ENCODE measurements at regions of chr2 and their contacts with region 1.

Region 1: DNA sequence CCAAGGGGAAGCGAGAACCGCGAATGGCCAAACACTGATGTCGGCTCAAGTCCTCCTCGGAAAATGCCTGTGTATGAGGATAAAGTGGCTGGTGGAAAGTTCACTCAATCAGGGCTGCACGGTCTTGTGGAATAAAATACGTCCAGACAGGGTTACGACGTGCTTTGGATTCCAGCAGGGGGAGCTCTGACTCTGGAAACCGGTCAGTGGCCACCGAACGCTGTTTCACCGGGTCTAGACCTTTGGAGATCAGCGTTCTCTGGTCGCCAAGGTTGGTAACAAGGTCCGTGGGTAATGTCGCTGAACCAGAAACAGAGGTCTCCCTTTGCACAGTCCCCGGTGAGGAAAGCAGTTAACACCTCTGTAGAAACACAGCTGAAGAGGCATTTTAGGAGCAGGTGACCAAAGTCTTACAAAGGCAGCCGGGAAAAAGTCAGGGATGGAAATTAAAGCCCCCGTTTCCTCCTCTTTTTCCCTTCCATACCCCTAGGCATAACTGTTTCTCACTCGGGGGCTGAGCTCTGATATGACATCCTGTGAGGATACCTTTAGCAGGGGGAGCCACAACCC is 47.8 kb downstream of the CDCA7 start:
- DNase-seq: peak; percentile 73
- H3K4me3 ChIP-seq: no peak overlapping the region
- H3K27ac ChIP-seq: no peak overlapping the region
- H3K4me1 ChIP-seq: no peaks in the 10 kb centered on the region
- H3K27me3 ChIP-seq: peaks cover 49 to 61% of the 10 kb centered on the region in 2 experiments
- CTCF ChIP-seq: peak; percentile 85 to 88
- POLR2A ChIP-seq: no peak

Region 2: DNA sequence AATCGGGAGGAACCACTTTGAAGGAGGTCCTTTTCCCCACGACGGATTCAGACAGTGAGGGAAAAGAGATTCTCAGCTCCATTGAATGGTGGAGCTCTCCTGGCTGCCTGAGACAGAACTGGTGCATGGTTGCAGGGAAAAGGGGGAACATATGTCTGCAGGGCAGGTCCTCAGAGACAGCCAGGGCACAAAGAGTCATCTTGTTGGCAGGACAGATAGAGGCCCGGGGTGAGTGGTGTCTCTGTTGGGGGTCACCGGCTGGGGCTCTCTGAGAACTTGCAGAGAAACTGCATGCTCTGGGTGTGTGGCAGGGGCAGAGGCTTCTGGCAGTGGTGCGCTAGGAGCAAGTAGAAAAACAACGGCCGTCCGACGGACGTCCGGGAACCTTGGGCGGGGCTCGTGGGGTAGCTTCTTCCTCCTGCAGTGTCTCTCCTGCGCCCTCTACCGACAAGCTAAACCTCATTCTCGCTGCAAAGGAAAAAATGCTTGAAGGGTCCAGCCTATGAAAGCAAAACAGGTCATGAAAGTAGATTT is 46.5 kb after region 1 on chr2:
- CTCF ChIA-PET with region 1: interaction called, 63 read pairs
- POLR2A ChIA-PET with region 1: no interaction called
- dilution Hi-C with region 1: no loop called
- intact Hi-C with region 1: loop called (anchors 1 kb)
- DNase-seq: peak; percentile 64
- H3K4me3 ChIP-seq: peak overlapping the region; percentile 29 to 45 (median 37)
- H3K27ac ChIP-seq: no peak overlapping the region
- H3K4me1 ChIP-seq: peaks cover 3% of the 10 kb centered on the region
- H3K27me3 ChIP-seq: peaks cover 3 to 9% of the 10 kb centered on the region in 2 experiments
- CTCF ChIP-seq: peak; percentile 63 to 65
- POLR2A ChIP-seq: peak; percentile 21

Region 3: DNA sequence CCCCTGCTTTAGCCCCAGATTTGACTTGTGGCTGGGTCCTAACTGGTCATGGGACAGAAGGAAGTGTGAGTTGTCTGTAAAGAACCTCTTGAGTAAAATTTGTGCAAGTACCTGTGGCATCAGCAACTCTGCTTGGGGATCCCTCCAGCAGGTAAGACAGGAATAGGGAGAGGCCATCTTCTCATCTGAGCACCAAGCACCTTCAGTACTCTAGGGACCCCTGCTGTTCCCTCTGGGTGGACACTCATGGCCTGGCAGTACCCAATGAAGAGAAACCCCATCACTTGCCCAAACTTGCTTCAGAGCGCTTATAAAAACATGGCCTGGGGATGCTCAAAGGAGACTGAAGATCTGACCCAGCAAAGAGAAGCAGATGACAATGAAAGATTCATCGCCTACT is 264.9 kb after region 1 on chr2:
- CTCF ChIA-PET with region 1: interaction called, 17 read pairs
- POLR2A ChIA-PET with region 1: no interaction called
- dilution Hi-C with region 1: no loop called
- intact Hi-C with region 1: loop called (anchors 1 kb)
- DNase-seq: no peak
- H3K4me3 ChIP-seq: no peak overlapping the region
- H3K27ac ChIP-seq: no peak overlapping the region
- H3K4me1 ChIP-seq: no peaks in the 10 kb centered on the region
- H3K27me3 ChIP-seq: peaks cover 4 to 21% of the 10 kb centered on the region in 2 experiments
- CTCF ChIP-seq: peak in 1 of 2 donors; percentile 15
- POLR2A ChIP-seq: no peak

Region 4: GRCh38 chr2:173884025-173884802 is 481.7 kb after region 1 on chr2:
- CTCF ChIA-PET with region 1: interaction called, 8 read pairs
- POLR2A ChIA-PET with region 1: no interaction called
- dilution Hi-C with region 1: no loop called
- intact Hi-C with region 1: loop called (anchors 5 kb)
- DNase-seq: peak; percentile 64
- H3K4me3 ChIP-seq: no peak overlapping the region
- H3K27ac ChIP-seq: no peak overlapping the region
- H3K4me1 ChIP-seq: no peaks in the 10 kb centered on the region
- H3K27me3 ChIP-seq: peaks cover 19 to 24% of the 10 kb centered on the region in 2 experiments
- CTCF ChIP-seq: peak; percentile 68 to 70
- POLR2A ChIP-seq: no peak

Region 5: GRCh38 chr2:174350018-174350417 is 947.5 kb after region 1 on chr2:
- CTCF ChIA-PET with region 1: interaction called, 35 read pairs
- POLR2A ChIA-PET with region 1: no interaction called
- dilution Hi-C with region 1: no loop called
- intact Hi-C with region 1: loop called (anchors 1 kb)
- DNase-seq: no peak
- H3K4me3 ChIP-seq: no peak overlapping the region
- H3K27ac ChIP-seq: no peak overlapping the region
- H3K4me1 ChIP-seq: no peaks in the 10 kb centered on the region
- H3K27me3 ChIP-seq: no peaks in the 10 kb centered on the region
- CTCF ChIP-seq: peak; percentile 11 to 35
- POLR2A ChIP-seq: no peak